Activated naive CD4-positive, alpha-beta T cell treated with anti-CD3 and anti-CD28 coated beads for 36 hours (primary cell): ENCODE measurements at regions of chr2 and their contacts with region 1.

Region 1: GRCh38 chr2:147288131-147288530 is 556.7 kb upstream of the ACVR2A start:
- DNase-seq: peak; percentile 45
- H3K4me3 Mint-ChIP-seq: no peak overlapping the region
- H3K27ac Mint-ChIP-seq: peak overlapping the region; percentile 78
- H3K4me1 Mint-ChIP-seq: peaks cover 24% of the 10 kb centered on the region
- H3K27me3 Mint-ChIP-seq: no peaks in the 10 kb centered on the region

Region 2: GRCh38 chr2:147904044-147904443 is 615.9 kb after region 1 on chr2:
- CTCF ChIA-PET with region 1: no interaction called
- intact Hi-C with region 1: loop called (anchors 2 kb)
- DNase-seq: no peak
- H3K4me3 Mint-ChIP-seq: no peak overlapping the region
- H3K27ac Mint-ChIP-seq: no peak overlapping the region
- H3K4me1 Mint-ChIP-seq: peaks cover 2% of the 10 kb centered on the region
- H3K27me3 Mint-ChIP-seq: no peaks in the 10 kb centered on the region

Region 3: GRCh38 chr2:148071351-148071750 is 783.2 kb after region 1 on chr2:
- CTCF ChIA-PET with region 1: no interaction called
- intact Hi-C with region 1: no loop called
- DNase-seq: no peak
- H3K4me3 Mint-ChIP-seq: no peak overlapping the region
- H3K27ac Mint-ChIP-seq: no peak overlapping the region
- H3K4me1 Mint-ChIP-seq: peaks cover 2% of the 10 kb centered on the region
- H3K27me3 Mint-ChIP-seq: no peaks in the 10 kb centered on the region